PC-3 (cell line): ENCODE measurements at regions of chr5 and their contacts with region 1.

Region 1: DNA sequence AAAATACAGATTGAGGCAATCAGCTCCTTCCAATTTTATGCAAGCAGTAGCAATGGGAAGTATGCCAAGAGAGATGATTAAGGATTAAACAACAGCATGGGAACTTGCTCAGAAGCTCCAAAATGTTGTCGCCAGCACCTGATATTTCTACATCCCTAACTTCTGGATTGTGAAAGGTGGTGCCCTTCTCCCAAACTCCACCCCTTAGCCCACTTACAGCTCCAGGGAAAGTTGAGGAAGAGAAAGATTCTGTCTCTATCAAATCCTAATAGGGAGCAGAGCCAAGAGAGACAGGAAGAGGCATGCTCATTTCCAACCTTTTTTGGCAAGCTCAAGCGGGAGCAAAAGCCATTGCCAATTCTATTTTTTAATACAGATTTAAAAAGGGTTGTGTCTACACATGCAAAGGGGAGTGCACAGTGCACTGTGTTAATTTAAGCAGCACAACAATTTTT is 92.4 kb upstream of the NR3C1 start:
- DNase-seq: peak; percentile 69
- ATAC-seq: peak; percentile 30
- H3K4me3 ChIP-seq: no peak overlapping the region
- H3K27ac ChIP-seq: peak overlapping the region; percentile 50
- H3K4me1 ChIP-seq: peaks cover 27% of the 10 kb centered on the region
- H3K27me3 ChIP-seq: no peaks in the 10 kb centered on the region
- CTCF ChIP-seq: no peak

Region 2: DNA sequence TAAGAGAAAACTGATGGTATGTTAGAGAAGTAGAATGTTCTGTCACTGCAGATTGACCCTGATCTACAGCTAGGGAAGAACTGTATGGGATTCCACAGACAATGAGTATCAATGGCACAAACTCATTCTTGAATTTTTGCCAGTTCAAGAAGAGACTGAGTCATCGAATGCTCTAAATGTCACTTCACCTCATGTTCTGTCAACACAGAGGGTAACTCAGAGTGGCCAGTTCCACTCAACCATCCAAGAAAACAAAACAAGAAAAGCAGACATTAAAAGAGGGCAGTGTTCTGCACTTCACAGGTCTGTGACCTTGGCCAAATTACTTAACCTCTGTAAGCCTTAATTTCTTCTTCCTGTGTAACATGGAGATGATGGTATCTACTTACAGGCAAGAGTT is 183.9 kb after region 1 on chr5:
- CTCF ChIA-PET with region 1: no interaction called
- POLR2A ChIA-PET with region 1: no interaction called
- intact Hi-C with region 1: loop called (anchors 10 kb)
- DNase-seq: peak; percentile 80
- ATAC-seq: peak; percentile 42
- H3K4me3 ChIP-seq: no peak overlapping the region
- H3K27ac ChIP-seq: no peak overlapping the region
- H3K4me1 ChIP-seq: peaks cover 27% of the 10 kb centered on the region
- H3K27me3 ChIP-seq: no peaks in the 10 kb centered on the region
- CTCF ChIP-seq: no peak

Region 3: GRCh38 chr5:144009116-144009515 is 513.3 kb after region 1 on chr5:
- CTCF ChIA-PET with region 1: no interaction called
- POLR2A ChIA-PET with region 1: no interaction called
- intact Hi-C with region 1: no loop called
- DNase-seq: no peak
- ATAC-seq: no peak
- H3K4me3 ChIP-seq: no peak overlapping the region
- H3K27ac ChIP-seq: no peak overlapping the region
- H3K4me1 ChIP-seq: no peaks in the 10 kb centered on the region
- H3K27me3 ChIP-seq: no peaks in the 10 kb centered on the region
- CTCF ChIP-seq: no peak

Region 4: DNA sequence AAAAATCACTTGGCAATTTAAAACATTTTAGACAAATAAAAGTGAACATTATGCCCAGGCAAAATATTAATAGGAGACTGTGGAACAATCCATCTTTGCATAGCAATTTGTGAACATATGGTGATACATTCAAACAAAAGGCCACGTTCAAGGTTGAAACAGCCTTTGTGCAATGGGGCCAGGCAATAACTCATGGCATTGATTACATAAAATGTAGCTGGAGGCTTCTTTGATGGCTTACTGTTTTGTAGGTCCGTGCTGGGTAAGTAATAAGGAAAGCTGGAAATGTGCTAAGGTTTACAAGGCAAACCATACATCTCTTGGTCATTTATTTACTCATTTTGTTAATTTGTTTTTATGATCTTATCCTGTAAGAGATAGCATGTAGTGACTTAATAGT is 1326.7 kb after region 1 on chr5:
- CTCF ChIA-PET with region 1: no interaction called
- POLR2A ChIA-PET with region 1: no interaction called
- intact Hi-C with region 1: no loop called
- DNase-seq: no peak
- ATAC-seq: no peak
- H3K4me3 ChIP-seq: no peak overlapping the region
- H3K27ac ChIP-seq: no peak overlapping the region
- H3K4me1 ChIP-seq: no peaks in the 10 kb centered on the region
- H3K27me3 ChIP-seq: no peaks in the 10 kb centered on the region
- CTCF ChIP-seq: no peak